Activated naive CD8-positive, alpha-beta T cell treated with anti-CD3 and anti-CD28 coated beads, Interleukin-2, amount 10 ng/mL, durations not matched to agents 7 days and 5 days (primary cell): ENCODE measurements at regions of chr11 and their contacts with region 1.

Region 1: DNA sequence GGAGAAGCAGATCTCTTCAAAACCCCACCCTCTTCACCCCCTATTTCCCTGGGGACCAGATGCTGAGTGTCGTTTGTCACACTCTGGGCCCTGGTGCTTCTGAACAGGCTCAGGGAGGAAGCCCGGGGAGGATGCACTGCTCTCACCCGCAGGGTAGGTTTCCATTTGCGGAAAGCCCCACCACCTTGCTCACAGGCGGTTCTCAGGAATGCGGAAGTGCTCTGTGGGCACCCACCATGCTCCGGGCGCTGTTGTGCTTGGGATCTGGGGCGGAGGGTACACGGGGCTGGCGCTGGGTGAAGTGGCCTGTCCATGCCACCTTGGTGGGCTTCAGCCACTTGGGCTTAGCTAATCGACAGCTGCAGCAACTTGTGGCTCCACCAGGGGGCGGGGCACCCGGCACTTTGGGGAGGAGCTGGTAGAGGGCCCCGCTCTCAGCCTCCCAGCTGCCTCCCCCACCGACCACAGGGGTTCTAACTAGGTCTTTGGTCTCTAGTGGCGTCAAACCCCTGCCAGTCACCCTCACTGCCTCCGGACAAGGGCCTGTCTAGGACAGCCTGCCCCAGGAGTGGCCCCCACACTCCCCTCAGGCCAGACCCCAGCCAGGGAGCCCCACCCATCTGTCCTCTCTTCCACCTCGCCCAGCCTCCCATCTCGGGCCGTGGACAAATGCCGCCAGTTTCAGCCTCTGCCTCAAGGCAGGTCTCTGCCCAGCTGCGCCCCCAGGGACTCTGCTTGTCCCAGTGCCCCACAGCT is 7.4 kb downstream of the NDUFV1 start:
- DNase-seq: peak; percentile 86
- ATAC-seq: peak; percentile 82
- H3K4me3 Mint-ChIP-seq: peak overlapping the region; percentile 81
- H3K27ac Mint-ChIP-seq: peak overlapping the region; percentile 95
- H3K4me1 Mint-ChIP-seq: peaks cover 15% of the 10 kb centered on the region
- H3K27me3 Mint-ChIP-seq: peaks cover 10% of the 10 kb centered on the region

Region 2: DNA sequence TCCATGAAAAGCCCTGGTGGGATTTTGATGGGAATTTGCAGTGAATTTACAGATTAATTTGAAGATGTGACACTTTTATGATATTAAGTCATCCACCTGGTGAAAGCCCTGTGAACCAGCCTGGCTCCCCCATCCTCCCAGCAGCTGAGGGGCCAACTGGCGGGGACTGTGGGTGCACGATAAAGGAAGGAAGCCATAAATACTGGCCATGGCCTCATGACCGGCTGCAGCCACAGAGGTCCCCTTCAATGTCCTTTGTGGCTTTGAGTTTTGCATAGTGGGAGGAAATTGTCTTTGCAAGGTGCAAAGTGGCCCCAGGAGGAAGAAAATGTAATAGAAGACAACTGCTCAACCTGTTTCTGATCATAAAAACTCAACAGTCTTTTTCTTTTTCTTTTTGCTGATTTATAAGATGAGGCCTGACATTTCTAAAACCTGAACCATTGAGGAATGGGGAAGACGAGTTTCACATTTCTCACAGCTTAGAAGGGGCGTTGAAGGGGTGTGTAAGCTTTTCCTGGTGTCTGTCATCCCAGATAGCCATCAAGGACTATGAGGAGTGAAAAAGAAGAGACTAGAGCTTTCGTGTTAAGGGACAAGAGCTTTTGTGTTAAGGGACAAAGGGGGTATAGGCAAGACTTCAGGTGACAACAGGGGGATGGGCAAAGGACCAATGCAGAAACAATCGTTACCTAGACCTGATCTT is 13.7 kb before region 1 on chr11:
- POLR2A ChIA-PET with region 1: no interaction called
- DNase-seq: no peak
- ATAC-seq: peak; percentile 39
- H3K4me3 Mint-ChIP-seq: peak overlapping the region; percentile 57
- H3K27ac Mint-ChIP-seq: peak overlapping the region; percentile 54
- H3K4me1 Mint-ChIP-seq: peaks cover 20% of the 10 kb centered on the region
- H3K27me3 Mint-ChIP-seq: peaks cover 31% of the 10 kb centered on the region

Region 3: GRCh38 chr11:67630228-67630942 is 16.2 kb after region 1 on chr11:
- POLR2A ChIA-PET with region 1: interaction called, 41 read pairs
- DNase-seq: peak; percentile 98
- ATAC-seq: peak; percentile 62
- H3K4me3 Mint-ChIP-seq: peak overlapping the region; percentile 93
- H3K27ac Mint-ChIP-seq: peak overlapping the region; percentile 91
- H3K4me1 Mint-ChIP-seq: peaks cover 13% of the 10 kb centered on the region
- H3K27me3 Mint-ChIP-seq: peaks cover 2% of the 10 kb centered on the region

Region 4: DNA sequence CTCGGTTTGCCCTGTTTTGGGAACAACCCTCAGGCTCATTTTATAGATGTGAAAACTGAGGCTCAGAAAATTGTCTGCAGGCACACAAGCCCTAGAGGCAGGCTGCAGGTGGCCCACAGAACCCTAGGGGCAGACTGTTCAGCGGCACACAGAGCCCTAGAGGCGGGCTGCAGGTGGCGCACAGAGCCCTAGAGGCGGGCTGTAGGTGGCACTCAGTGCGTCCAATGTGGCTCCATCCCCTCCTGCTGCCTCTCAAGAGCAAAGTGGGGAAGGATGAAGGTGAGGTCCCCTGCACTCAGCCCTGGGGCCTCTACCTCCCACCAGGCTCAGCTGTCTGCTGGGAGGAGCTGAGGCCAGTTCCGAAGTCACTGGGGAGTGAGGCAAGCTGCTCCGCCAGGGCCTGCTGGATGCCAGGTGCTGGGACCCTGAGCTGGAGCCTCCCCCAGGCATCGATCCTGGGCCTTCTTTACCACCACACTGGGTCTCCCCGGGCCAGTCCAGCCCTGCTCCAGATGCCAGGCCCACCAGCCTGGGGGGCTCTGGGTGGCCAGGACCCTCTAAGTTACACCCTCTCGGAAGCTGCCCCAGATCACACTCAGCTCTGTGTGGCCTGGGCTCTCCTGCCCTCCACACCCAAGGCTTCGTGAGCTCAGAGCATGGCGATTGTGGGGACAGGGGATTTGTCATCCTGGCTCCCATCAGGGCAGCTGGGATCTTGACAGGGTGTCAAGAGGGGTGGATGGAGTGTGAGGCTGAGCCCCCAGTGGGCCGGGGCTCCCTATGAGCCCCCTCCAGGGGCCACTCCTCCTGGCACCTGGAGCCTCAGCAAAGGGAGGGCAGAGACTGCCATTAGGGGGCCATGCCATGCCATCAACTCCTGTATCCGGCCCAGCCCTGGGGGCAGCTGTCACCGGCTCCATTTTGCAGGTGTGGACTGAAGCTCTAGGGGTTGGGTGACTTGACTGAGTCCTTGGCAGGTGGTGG is 34.3 kb after region 1 on chr11:
- POLR2A ChIA-PET with region 1: interaction called, 10 read pairs
- DNase-seq: peak; percentile 61
- ATAC-seq: peak; percentile 75
- H3K4me3 Mint-ChIP-seq: peak overlapping the region; percentile 79
- H3K27ac Mint-ChIP-seq: peak overlapping the region; percentile 85
- H3K4me1 Mint-ChIP-seq: peaks cover 47% of the 10 kb centered on the region
- H3K27me3 Mint-ChIP-seq: peaks cover 12% of the 10 kb centered on the region

Region 5: GRCh38 chr11:67698247-67698646 is 84.1 kb after region 1 on chr11:
- POLR2A ChIA-PET with region 1: no interaction called
- DNase-seq: no peak
- ATAC-seq: peak; percentile 63
- H3K4me3 Mint-ChIP-seq: no peak overlapping the region
- H3K27ac Mint-ChIP-seq: no peak overlapping the region
- H3K4me1 Mint-ChIP-seq: no peaks in the 10 kb centered on the region
- H3K27me3 Mint-ChIP-seq: peaks cover 16% of the 10 kb centered on the region